ENCODE measurements at regions of chr12 and their contacts with region 1.

Region 1: DNA sequence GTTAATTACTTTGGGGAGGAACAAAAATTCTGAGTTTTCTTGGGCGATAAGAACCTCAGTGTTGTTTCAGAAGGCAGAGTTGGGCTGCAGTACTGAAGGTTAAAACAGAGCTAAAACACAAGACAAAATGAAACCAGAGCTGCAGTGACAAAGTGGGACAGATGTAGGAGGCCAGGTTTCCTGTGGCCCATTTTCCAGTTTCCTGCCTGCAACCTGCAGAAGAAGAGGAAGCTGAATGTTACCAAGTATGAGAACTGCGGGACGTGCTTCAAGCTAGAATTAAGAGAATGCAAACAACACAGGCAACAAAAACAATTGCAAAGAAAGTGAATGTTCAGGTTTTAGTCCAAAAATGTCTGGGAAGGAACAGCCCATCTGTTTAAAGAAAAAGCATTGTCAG is 17.8 kb downstream of the ELK3 start:
- DNase-seq: peak; percentile 33
- H3K4me3 Mint-ChIP-seq: peak overlapping the region; percentile 61
- H3K27ac Mint-ChIP-seq: peak overlapping the region; percentile 84
- H3K4me1 Mint-ChIP-seq: peaks cover 85% of the 10 kb centered on the region
- H3K27me3 Mint-ChIP-seq: no peaks in the 10 kb centered on the region

Region 2: GRCh38 chr12:95942524-95943329 is 269.3 kb before region 1 on chr12 and contains the start of gene CCDC38:
- CTCF ChIA-PET with region 1: no interaction called
- intact Hi-C with region 1: loop called (anchors 5 kb)
- DNase-seq: peak; percentile 91
- H3K4me3 Mint-ChIP-seq: peak within 1 kb of the TSS; percentile 86
- H3K27ac Mint-ChIP-seq: peak within 1 kb of the TSS; percentile 80
- H3K4me1 Mint-ChIP-seq: peaks cover 4% of the 10 kb centered on the region
- H3K27me3 Mint-ChIP-seq: no peaks in the 10 kb centered on the region
- total RNA-seq, gene CCDC38: 0.49 TPM in 1 of 2 experiments, not detected in the other

Region 3: DNA sequence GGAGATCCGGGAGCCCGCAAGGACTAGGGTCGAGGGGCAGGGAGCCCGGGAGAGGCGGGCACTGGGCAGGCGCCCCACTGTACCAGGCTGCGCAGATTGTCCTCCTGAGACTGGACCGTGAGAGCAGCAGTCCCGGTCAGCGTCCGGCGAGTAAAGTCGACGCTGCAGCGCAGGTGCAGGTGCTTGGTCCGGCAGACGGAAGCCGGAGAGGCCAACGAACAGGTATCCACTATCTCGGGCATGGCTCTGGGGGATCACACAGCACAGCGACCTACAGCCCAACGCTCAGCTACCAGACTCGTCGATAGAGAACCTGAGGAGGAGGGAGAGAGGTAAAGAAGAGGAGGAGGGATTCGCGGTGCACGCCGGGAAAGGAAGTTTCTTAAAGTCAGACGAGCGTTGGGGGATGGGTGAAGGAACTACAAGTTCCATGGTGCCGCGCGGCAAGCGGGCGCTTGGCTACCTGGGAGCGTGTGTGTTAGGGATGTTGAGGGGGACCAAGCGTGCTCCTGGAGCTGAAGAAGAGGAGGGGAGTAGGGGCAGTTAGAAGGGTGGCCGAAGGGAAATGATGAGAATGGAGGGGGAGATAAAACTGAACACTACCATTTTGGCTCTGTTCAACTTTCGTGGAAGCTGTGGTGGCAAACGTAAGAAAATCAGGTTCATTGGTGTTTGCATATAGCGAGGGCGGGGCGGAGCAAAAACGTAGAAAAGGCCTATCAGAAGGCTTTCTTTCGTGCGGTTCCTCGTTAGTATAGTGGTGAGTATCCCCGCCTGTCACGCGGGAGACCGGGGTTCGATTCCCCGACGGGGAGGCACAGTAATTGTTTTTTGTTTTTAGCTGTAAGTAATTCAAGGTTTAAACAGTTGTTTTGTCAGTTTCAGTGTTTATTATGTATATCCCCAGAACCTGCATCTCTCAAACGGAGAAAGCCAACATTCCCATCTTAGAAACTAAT is 176.4 kb before region 1 on chr12 and contains the start of gene LTA4H:
- CTCF ChIA-PET with region 1: interaction called, 3 read pairs
- intact Hi-C with region 1: loop called (anchors 1 kb)
- DNase-seq: peak; percentile 98
- H3K4me3 Mint-ChIP-seq: no peak within 1 kb of the TSS
- H3K27ac Mint-ChIP-seq: no peak within 1 kb of the TSS
- H3K4me1 Mint-ChIP-seq: peaks cover 19% of the 10 kb centered on the region
- H3K27me3 Mint-ChIP-seq: no peaks in the 10 kb centered on the region
- total RNA-seq, gene LTA4H: 125 TPM

Region 4: GRCh38 chr12:96132819-96133218 is 79.2 kb before region 1 on chr12:
- CTCF ChIA-PET with region 1: interaction called, 8 read pairs
- intact Hi-C with region 1: loop called (anchors 1 kb)
- DNase-seq: peak; percentile 27
- H3K4me3 Mint-ChIP-seq: no peak overlapping the region
- H3K27ac Mint-ChIP-seq: no peak overlapping the region
- H3K4me1 Mint-ChIP-seq: peaks cover 27% of the 10 kb centered on the region
- H3K27me3 Mint-ChIP-seq: no peaks in the 10 kb centered on the region

Region 5: GRCh38 chr12:96186607-96187301 is 25.2 kb before region 1 on chr12:
- CTCF ChIA-PET with region 1: interaction called, 12 read pairs
- intact Hi-C with region 1: no loop called
- DNase-seq: peak; percentile 17
- H3K4me3 Mint-ChIP-seq: peak overlapping the region; percentile 11
- H3K27ac Mint-ChIP-seq: no peak overlapping the region
- H3K4me1 Mint-ChIP-seq: peaks cover 24% of the 10 kb centered on the region
- H3K27me3 Mint-ChIP-seq: no peaks in the 10 kb centered on the region

Region 6: GRCh38 chr12:96427269-96427729 is 215.3 kb after region 1 on chr12:
- CTCF ChIA-PET with region 1: no interaction called
- intact Hi-C with region 1: no loop called
- DNase-seq: peak; percentile 81
- H3K4me3 Mint-ChIP-seq: no peak overlapping the region
- H3K27ac Mint-ChIP-seq: peak overlapping the region; percentile 74
- H3K4me1 Mint-ChIP-seq: peaks cover 42% of the 10 kb centered on the region
- H3K27me3 Mint-ChIP-seq: no peaks in the 10 kb centered on the region

Region 7: GRCh38 chr12:96501139-96501761 is 289.3 kb after region 1 on chr12:
- CTCF ChIA-PET with region 1: no interaction called
- intact Hi-C with region 1: loop called (anchors 5 kb)
- DNase-seq: peak; percentile 44
- H3K4me3 Mint-ChIP-seq: no peak overlapping the region
- H3K27ac Mint-ChIP-seq: peak overlapping the region; percentile 74
- H3K4me1 Mint-ChIP-seq: peaks cover 31% of the 10 kb centered on the region
- H3K27me3 Mint-ChIP-seq: no peaks in the 10 kb centered on the region